T-cell (primary cell): ENCODE measurements at regions of chr18 and their contacts with region 1.

Region 1: GRCh38 chr18:54162431-54162830 is 62.0 kb downstream of the MBD2 start:
- DNase-seq: no peak
- ATAC-seq: no peak
- H3K4me3 ChIP-seq: no peak overlapping the region
- H3K4me3 Mint-ChIP-seq: no peak overlapping the region
- H3K27ac ChIP-seq: no peak overlapping the region
- H3K27ac Mint-ChIP-seq: no peak overlapping the region
- H3K4me1 ChIP-seq: no peaks in the 10 kb centered on the region
- H3K4me1 Mint-ChIP-seq: peaks cover 0 to 3% (median 0%) of the 10 kb centered on the region in 3 donors
- H3K27me3 ChIP-seq: no peaks in the 10 kb centered on the region
- H3K27me3 Mint-ChIP-seq: no peaks in the 10 kb centered on the region

Region 2: GRCh38 chr18:54269893-54270844 is 107.7 kb after region 1 on chr18:
- CTCF ChIA-PET with region 1: no interaction called
- POLR2A ChIA-PET with region 1: interaction called in 1 of 2 experiments, 11 read pairs
- DNase-seq: peak in 10 of 35 experiments; percentile 7 to 55 (median 14)
- ATAC-seq: peak; percentile 7 to 46 (median 41)
- H3K4me3 ChIP-seq: peak overlapping the region; percentile 86
- H3K4me3 Mint-ChIP-seq: peak overlapping the region; percentile 90 to 96 (median 92)
- H3K27ac ChIP-seq: peak overlapping the region; percentile 92
- H3K27ac Mint-ChIP-seq: peak overlapping the region; percentile 98
- H3K4me1 ChIP-seq: peaks cover 6 to 20% of the 10 kb centered on the region in 2 experiments
- H3K4me1 Mint-ChIP-seq: peaks cover 22 to 30% (median 23%) of the 10 kb centered on the region in 3 donors
- H3K27me3 ChIP-seq: no peaks in the 10 kb centered on the region
- H3K27me3 Mint-ChIP-seq: no peaks in the 10 kb centered on the region

Region 3: DNA sequence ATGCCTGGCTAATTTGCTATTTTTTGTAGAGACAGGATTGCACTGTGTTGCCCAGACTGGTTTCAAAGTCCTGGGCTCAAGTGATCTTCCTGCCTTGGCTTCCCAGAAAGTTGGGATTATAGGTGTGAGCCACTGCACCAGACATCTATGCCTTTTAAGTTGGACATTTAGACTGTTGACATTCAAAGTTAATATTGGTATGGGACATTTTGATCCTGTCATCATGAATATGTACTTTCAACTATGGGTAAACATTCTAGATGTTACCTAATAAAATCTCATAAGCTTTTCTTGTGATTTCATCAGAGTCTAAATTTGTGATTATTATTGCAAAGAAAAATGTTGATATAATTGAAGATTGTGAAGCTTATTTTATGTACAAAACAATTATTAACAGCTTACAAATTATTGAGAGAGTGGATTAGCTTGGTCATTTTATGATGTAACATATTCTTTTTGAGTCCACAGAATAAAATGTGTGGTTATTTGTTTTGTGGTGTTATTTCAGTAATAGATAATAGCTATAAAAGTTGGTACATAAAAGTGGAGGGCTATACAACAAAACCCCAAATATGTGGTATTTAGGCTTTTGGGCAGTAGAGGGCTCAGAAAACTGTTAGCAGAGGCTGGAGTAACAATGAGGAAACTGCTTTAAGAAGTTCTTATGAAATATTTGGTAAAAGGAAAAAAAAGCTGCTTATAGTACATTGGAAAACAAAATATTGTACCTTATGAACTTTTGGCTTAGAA is 153.8 kb after region 1 on chr18:
- CTCF ChIA-PET with region 1: no interaction called
- POLR2A ChIA-PET with region 1: interaction called in 1 of 2 experiments, 11 read pairs
- DNase-seq: no peak
- ATAC-seq: no peak
- H3K4me3 ChIP-seq: no peak overlapping the region
- H3K4me3 Mint-ChIP-seq: no peak overlapping the region
- H3K27ac ChIP-seq: no peak overlapping the region
- H3K27ac Mint-ChIP-seq: no peak overlapping the region
- H3K4me1 ChIP-seq: no peaks in the 10 kb centered on the region
- H3K4me1 Mint-ChIP-seq: no peaks in the 10 kb centered on the region
- H3K27me3 ChIP-seq: no peaks in the 10 kb centered on the region
- H3K27me3 Mint-ChIP-seq: peaks cover 10 to 11% of the 10 kb centered on the region in 2 donors